Activated CD4-positive, alpha-beta T cell treated with anti-CD3 and anti-CD28 coated beads, Interleukin-2, amount 10 ng/mL, durations not matched to agents 7 days and 5 days (primary cell): ENCODE measurements at regions of chr5 and their contacts with region 1.

Region 1: GRCh38 chr5:149247726-149248125 is 23.9 kb upstream of the AFAP1L1 start:
- DNase-seq: no peak
- H3K4me3 Mint-ChIP-seq: no peak overlapping the region
- H3K27ac Mint-ChIP-seq: no peak overlapping the region
- H3K4me1 Mint-ChIP-seq: peaks cover 15% of the 10 kb centered on the region
- H3K27me3 Mint-ChIP-seq: peaks cover 21% of the 10 kb centered on the region

Region 2: DNA sequence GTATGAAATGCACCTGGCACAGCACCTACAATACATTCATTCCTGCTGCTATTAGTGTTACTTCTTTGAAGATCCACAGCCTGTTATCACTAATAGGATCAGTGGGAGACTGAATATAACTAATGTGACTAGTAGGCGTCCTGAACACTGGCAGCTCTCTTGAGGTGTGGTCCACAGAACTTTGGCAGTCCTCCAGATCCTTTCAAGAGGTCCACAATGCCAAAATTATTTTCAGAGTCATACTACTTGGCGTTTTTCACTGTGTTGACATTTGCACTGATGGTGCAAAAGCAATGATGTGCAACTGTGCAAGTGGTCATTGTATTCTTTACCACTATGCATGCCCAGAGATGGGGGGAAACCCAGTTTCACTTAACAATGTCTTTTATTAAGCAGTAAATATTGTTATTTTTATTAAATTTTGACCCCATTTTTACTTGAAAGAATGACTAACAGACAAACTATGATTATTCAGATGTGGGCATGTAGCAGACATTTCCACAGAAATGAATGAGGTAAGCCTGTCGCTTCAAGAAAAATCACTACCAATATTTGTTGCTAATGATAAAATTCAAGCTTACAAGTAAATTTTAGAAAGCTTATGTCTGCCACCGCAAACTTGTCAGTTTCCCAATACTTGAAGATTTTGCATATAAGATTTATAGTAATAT is 372.4 kb before region 1 on chr5:
- CTCF ChIA-PET with region 1: no interaction called
- POLR2A ChIA-PET with region 1: no interaction called
- DNase-seq: no peak
- H3K4me3 Mint-ChIP-seq: no peak overlapping the region
- H3K27ac Mint-ChIP-seq: no peak overlapping the region
- H3K4me1 Mint-ChIP-seq: no peaks in the 10 kb centered on the region
- H3K27me3 Mint-ChIP-seq: peaks cover 5% of the 10 kb centered on the region

Region 3: DNA sequence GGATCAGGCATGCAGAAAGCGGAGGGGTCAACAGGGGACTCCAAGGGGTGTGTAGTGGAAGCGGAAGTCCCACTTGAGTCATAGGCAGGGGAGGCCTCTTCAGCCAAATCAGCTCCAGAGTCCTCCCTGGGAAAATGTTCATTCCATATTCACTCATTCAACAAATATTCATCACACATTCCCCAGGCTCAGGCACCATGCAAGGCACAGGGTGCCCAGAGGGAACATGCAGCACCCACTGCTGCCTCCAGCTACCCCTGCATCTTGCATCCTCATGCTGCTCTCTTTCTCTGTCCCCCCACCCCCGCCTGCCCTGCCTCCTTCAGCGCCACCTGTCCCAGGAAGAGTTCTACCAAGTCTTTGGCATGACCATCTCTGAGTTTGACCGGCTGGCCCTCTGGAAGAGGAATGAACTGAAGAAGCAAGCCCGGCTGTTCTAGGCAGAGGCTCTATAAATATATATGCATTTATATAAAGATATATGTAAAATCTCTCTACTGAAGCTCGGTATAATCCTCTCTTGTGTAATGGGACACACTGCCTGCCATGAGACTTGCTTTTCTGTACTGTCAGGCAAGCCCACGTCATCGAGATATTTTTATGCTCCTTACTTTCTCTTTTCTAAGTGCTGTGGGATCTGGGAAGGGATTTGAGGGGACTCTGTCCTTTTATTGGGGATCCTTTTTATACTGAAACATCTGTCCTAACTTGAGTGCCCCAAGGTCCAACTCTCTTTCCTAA is 10.4 kb after region 1 on chr5:
- CTCF ChIA-PET with region 1: interaction called, 11 read pairs
- POLR2A ChIA-PET with region 1: no interaction called
- DNase-seq: no peak
- H3K4me3 Mint-ChIP-seq: no peak overlapping the region
- H3K27ac Mint-ChIP-seq: no peak overlapping the region
- H3K4me1 Mint-ChIP-seq: no peaks in the 10 kb centered on the region
- H3K27me3 Mint-ChIP-seq: peaks cover 13% of the 10 kb centered on the region

Region 4: DNA sequence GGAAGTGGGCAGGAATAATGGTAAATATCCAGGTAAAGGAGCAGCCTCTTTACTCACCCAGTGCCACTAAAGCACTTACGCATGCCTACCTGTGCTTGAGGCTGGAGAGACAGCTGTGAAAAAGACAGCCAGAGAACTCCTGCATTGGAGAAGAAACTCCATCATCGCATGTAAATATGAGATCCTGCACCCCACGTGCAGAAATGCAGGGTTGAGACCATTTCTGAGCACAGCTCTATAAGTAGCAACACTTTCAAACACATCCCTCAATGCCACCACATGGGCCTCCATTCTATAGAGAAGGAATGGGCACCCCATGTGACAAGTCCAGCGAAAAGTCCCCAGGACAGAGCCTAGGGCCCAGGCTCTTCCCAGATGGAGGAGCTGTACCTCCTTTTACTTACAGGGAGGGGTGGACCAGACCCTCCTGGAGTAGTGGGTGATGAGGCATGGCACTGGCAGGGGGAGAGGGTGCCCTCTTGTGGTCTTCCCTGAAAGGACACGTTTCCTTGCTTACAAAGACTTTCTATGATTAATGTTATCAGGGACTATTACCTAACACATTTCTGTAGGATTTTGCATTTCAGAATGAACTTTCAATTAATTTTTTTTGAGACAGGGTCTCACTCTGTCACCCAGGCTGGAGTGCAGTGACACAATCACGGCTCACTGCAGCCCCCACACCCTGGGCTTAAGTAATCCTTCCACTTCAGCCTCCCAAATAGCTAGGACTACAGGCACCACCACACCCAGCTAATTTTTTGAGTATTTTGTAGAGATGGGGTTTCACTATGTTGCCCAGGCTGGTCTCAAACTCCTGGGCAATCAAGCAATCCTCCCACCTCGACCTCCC is 186.7 kb after region 1 on chr5:
- CTCF ChIA-PET with region 1: no interaction called
- POLR2A ChIA-PET with region 1: no interaction called
- DNase-seq: peak; percentile 61
- H3K4me3 Mint-ChIP-seq: no peak overlapping the region
- H3K27ac Mint-ChIP-seq: no peak overlapping the region
- H3K4me1 Mint-ChIP-seq: peaks cover 17% of the 10 kb centered on the region
- H3K27me3 Mint-ChIP-seq: no peaks in the 10 kb centered on the region